ENCODE measurements at regions of chr1 and their contacts with region 1.

Region 1: DNA sequence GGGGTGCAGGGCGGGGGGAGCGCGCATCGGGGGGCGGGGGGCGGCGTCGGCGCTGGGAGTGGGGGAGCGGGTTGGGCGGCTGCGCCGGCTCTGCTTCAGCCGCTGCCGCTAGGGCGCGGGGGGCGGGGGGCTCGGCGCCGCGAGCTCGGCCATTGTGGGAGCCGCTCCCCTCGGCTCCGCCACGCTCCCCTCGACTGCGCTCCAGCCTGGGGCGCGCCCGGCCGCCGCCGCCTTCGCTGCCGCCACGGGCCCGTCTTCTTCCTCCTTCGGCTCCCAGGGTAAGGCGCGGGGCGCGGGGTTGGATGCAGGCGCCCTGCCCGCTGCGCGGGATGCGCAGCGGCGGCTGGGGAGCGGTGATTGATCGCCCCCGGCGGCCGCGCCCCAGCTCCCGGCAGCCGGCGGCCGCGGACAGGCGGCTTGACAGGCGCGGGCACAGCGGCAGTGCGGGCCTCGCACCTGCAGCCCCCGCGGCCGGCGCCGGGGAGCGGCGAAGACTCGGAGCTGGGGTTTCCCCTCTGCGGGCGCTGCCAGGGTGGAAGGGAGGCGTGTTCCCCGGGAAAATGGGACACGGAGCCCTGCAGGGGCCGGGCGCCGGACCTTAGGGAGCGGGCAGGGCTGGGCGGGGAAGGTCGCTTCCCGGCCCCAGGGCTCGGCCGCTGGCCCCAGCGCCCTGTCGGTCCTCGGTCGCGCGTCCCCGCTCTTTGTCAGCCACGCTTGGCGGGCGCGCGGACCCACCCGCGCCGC is 55.3 kb downstream of the NDUFS5 start:
- DNase-seq: peak in 1 of 2 experiments; percentile 77
- H3K4me3 ChIP-seq: peak overlapping the region; percentile 50 to 72 (median 56)
- H3K27ac ChIP-seq: no peak overlapping the region
- H3K4me1 ChIP-seq: peaks cover 6 to 10% (median 6%) of the 10 kb centered on the region in 4 experiments
- H3K27me3 ChIP-seq: peaks cover 0 to 12% (median 8%) of the 10 kb centered on the region in 4 experiments; a peak in 6 of 7 replicates
- CTCF ChIP-seq: no peak
- EP300 ChIP-seq: no peak
- POLR2A ChIP-seq: no peak; a peak in 1 of 3 replicates
- RAD21 ChIP-seq: no peak; a peak in 1 of 4 replicates

Region 2: DNA sequence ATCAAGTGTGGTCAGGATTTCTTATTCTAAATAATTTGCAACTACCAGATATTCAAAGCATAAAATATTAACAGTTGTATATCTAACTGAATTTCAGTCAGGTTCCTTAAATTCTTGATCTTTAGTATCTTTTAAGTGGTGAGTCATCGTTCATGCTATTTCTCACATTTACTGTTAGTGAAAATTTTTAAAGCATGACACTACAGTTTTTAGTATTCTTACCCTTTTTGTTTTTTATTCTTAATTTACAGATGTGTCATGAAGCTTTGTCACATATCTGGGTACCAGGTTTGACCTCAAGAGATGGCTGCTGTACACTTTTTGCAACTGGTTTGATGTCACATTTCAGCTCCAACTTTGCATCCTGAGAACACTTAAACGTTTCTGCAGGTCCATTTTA is 77.6 kb before region 1 on chr1:
- CTCF ChIA-PET with region 1: interaction called, 3 read pairs
- POLR2A ChIA-PET with region 1: interaction called, 11 read pairs
- DNase-seq: no peak
- H3K4me3 ChIP-seq: no peak overlapping the region
- H3K27ac ChIP-seq: no peak overlapping the region
- H3K4me1 ChIP-seq: peaks cover 0 to 10% (median 7%) of the 10 kb centered on the region in 4 experiments
- H3K27me3 ChIP-seq: no peaks in the 10 kb centered on the region
- CTCF ChIP-seq: no peak
- EP300 ChIP-seq: no peak
- POLR2A ChIP-seq: no peak
- RAD21 ChIP-seq: no peak

Region 3: DNA sequence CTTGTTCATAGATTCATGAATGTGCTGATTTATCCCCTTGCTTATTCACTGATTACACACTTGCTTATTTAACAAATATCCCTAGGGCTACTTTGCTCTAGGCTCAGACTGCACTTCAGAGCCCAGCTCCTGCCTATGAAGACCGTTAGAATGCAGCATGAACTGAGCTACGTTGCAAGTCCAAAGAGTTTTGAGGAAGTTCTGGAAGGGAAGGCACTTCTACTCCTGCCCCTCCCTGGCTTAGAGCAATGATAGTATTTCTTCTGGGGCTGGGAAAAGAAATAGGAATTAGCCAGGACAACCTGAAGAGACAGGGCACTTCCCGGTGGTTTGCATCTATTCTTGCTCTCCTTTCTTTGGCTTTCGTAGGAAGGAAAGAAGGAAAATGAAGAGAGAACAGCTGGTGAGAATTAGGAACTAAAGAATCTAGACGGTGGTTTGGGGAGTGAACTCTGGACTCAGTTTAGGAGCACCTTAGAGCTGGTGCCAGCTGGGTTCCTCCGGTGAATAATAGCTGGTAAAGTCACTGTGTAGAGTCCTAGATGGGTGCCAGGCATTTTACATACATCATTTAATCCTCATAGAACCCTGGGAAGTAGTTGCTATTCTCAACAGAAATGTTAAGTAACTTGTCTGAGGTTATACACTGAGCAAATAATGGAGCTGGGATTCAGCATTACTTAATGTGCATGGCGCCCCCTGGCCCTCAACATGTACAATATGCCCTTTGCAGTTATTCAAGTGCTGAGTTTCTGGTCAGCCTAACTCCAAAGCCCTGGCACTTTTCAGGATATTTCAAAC is 10.6 kb after region 1 on chr1:
- CTCF ChIA-PET with region 1: interaction called, 26 read pairs
- POLR2A ChIA-PET with region 1: interaction called, 4 read pairs
- DNase-seq: peak in 1 of 2 experiments; percentile 59
- H3K4me3 ChIP-seq: no peak overlapping the region
- H3K27ac ChIP-seq: no peak overlapping the region
- H3K4me1 ChIP-seq: no peaks in the 10 kb centered on the region; a peak in 1 of 7 replicates
- H3K27me3 ChIP-seq: no peaks in the 10 kb centered on the region
- CTCF ChIP-seq: peak in 2 of 3 experiments; percentile 60 to 76; a peak in 3 of 4 replicates
- EP300 ChIP-seq: no peak
- POLR2A ChIP-seq: no peak
- RAD21 ChIP-seq: peak; percentile 81 to 83

Region 4: DNA sequence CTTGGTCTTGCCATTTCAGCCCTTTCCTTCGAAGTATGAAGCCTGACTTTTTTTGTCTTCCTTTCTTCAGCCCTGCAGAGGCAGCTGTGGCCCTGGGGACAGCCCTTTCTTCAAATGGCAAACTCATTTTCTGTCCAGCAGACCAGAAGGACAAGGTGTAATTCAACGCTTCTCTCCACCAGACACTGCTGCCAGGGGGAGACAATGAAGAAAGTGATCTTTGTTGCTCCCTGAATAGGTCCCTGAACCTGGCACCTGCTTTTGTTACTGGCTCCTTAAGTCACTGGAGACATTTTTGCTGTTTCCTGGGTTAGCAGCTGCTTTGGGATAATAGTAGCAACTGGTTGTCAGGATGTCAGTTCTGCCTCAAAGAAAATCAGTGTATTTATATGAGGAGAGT is 72.2 kb after region 1 on chr1:
- CTCF ChIA-PET with region 1: no interaction called
- POLR2A ChIA-PET with region 1: no interaction called
- DNase-seq: no peak
- H3K4me3 ChIP-seq: no peak overlapping the region
- H3K27ac ChIP-seq: no peak overlapping the region
- H3K4me1 ChIP-seq: peaks cover 8 to 34% (median 32%) of the 10 kb centered on the region in 4 experiments
- H3K27me3 ChIP-seq: no peaks in the 10 kb centered on the region
- CTCF ChIP-seq: no peak
- EP300 ChIP-seq: no peak
- POLR2A ChIP-seq: no peak
- RAD21 ChIP-seq: no peak

Region 5: GRCh38 chr1:39183503-39184353 is 102.3 kb after region 1 on chr1:
- CTCF ChIA-PET with region 1: no interaction called
- POLR2A ChIA-PET with region 1: no interaction called
- DNase-seq: peak in 1 of 2 experiments; percentile 59
- H3K4me3 ChIP-seq: no peak overlapping the region
- H3K27ac ChIP-seq: no peak overlapping the region
- H3K4me1 ChIP-seq: peaks cover 2 to 9% (median 3%) of the 10 kb centered on the region in 4 experiments; a peak in 4 of 7 replicates
- H3K27me3 ChIP-seq: no peaks in the 10 kb centered on the region
- CTCF ChIP-seq: peak; percentile 38 to 66 (median 58)
- EP300 ChIP-seq: no peak
- POLR2A ChIP-seq: no peak
- RAD21 ChIP-seq: peak; percentile 55 to 61